Dorsolateral prefrontal cortex (tissue), 120 donors: ENCODE measurements at regions of chr6 and their contacts with region 1.

Region 1: DNA sequence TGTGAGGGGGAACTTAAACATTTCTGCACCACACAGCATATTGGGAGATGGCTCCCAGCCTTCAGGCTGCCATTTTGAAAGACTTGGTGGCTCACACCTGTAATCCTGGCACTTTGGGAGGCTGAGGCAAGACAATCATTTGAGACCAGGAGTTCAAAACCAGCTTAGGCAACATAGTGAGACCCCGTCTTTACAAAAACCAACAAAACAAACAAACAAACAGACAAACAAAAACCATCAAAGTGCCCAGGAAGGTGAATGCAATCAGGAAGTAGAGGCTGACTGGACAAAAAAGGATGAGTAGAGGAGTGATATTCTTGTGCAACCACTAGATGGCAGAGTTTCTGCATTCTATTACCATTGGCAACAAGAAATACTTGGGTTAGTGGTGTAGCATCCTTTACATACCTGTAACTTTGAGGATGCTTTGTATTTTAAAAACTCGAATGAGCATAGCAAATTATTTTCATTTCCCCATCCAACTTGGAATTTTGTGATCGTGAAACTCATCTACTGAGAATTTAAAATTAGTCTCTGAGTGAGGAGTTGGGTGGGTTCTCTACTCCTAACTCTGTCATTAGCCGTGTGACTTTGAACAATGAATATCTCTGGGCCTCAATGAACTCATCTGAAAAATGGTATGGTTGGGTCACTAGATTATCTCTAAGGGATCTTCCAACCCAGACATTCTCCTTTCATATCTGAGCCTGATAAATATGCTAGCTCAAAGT is 84.4 kb downstream of the CRYBG1 start:
- DNase-seq: no peak
- H3K4me3 ChIP-seq: no peak overlapping the region
- H3K27ac ChIP-seq: no peak overlapping the region
- H3K27me3 ChIP-seq: peaks cover 0 to 33% (median 8%) of the 10 kb centered on the region in 45 donors
- CTCF ChIP-seq: peak; percentile 57 to 90 (median 81)

Region 2: DNA sequence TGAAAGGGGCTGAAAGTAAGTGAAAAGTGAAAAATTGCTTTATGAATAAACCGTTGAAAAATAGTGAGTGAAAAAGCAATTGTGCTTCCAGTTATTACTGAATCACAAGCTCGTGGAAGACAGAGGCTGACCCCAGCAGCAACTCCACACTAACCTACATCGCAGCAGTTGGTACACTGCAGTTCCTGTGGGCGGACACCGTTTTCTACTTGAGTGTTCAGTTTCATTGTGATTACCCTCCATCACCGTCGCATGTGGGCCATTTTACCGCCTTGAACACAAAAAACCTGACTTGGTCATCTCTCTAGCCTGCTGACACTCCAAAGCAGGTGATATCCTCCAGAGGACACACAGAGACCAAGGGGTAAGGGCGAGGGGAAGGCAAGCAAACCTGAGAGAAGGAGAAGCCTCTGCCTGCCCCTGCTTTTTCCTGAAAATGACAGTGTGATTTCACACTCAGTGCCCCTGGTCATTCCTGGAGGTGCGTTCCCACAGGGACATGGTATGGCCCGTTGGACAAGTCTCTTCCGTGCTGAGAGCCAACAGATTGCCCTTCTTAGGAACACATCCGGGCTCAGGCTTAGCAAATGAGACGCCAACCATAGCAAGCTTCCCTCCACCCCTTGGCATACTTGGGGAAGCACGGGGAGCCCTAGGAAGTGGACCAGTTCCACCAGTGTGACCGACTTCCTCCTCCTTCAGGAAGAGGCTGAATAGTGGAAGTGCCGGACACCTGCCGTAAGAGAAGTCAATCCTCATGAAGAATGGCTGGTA is 330.3 kb before region 1 on chr6:
- intact Hi-C with region 1: no loop called
- DNase-seq: no peak
- H3K4me3 ChIP-seq: no peak overlapping the region
- H3K27ac ChIP-seq: no peak overlapping the region
- H3K27me3 ChIP-seq: no peaks in the 10 kb centered on the region
- CTCF ChIP-seq: no peak

Region 3: DNA sequence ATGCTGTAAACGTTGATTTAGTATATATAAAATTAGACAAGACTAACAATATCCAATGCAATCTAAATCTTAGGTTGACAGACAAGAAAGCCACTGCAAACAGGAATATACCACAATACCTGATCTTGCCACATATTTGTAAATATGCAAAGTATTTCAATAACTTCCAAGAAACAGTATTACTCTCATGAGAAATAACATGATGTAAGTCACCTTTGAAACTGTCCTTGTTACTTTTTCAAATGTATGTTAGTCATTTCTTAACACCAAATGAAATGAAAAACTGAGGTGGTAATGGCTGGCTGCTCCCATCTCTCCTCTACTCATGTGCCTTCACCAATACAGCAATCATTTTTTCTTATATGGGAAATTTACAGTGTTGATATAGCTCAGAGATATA is 238.0 kb before region 1 on chr6:
- intact Hi-C with region 1: no loop called
- DNase-seq: no peak
- H3K4me3 ChIP-seq: no peak overlapping the region
- H3K27ac ChIP-seq: no peak overlapping the region
- H3K27me3 ChIP-seq: no peaks in the 10 kb centered on the region
- CTCF ChIP-seq: no peak

Region 4: GRCh38 chr6:106339334-106340029 is 105.5 kb before region 1 on chr6:
- intact Hi-C with region 1: loop called in 1 of 2 experiments (anchors 5 kb)
- DNase-seq: peak in 4 of 10 donors; percentile 21 to 69 (median 42)
- H3K4me3 ChIP-seq: peak overlapping the region in 22 of 59 donors; percentile 5 to 43 (median 28)
- H3K27ac ChIP-seq: no peak overlapping the region
- H3K27me3 ChIP-seq: peaks cover 0 to 3% (median 0%) of the 10 kb centered on the region in 45 donors
- CTCF ChIP-seq: peak; percentile 43 to 83 (median 69)

Region 5: GRCh38 chr6:106568530-106568929 is 123.6 kb after region 1 on chr6:
- intact Hi-C with region 1: loop called (anchors 2 to 5 kb)
- DNase-seq: no peak
- H3K4me3 ChIP-seq: no peak overlapping the region
- H3K27ac ChIP-seq: peak overlapping the region in 5 of 59 donors; percentile 33 to 71 (median 55)
- H3K27me3 ChIP-seq: no peaks in the 10 kb centered on the region
- CTCF ChIP-seq: no peak

Region 6: DNA sequence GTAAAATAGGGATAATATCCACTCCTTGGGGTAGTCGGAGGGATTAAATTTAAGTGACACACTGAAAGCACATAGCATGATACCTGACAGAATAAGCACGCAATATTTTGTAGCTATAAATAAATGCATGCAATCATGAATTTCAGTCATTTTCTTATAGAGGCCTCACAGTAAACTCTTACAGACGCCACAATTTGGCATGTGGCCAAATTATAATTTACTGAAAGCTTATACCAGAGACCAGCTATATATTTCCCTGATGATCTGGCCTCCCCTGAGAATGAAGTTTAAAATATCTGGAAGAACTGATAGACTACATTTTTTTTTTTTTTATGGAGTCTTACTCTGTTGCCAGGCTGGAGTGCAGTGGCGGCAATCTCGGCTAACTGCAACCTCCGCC is 225.3 kb after region 1 on chr6:
- intact Hi-C with region 1: no loop called
- DNase-seq: no peak
- H3K4me3 ChIP-seq: no peak overlapping the region
- H3K27ac ChIP-seq: no peak overlapping the region
- H3K27me3 ChIP-seq: no peaks in the 10 kb centered on the region
- CTCF ChIP-seq: no peak

Region 7: GRCh38 chr6:106979427-106979884 is 534.5 kb after region 1 on chr6:
- intact Hi-C with region 1: loop called (anchors 2 to 10 kb)
- DNase-seq: peak; percentile 67 to 92 (median 86)
- H3K4me3 ChIP-seq: no peak overlapping the region
- H3K27ac ChIP-seq: no peak overlapping the region
- H3K27me3 ChIP-seq: peaks cover under 1 to 73% (median 31%) of the 10 kb centered on the region in 45 donors
- CTCF ChIP-seq: peak; percentile 83 to 97 (median 93)